Activated naive CD4-positive, alpha-beta T cell treated with anti-CD3 and anti-CD28 coated beads for 36 hours (primary cell): ENCODE measurements at regions of chr11 and their contacts with region 1.

Region 1: DNA sequence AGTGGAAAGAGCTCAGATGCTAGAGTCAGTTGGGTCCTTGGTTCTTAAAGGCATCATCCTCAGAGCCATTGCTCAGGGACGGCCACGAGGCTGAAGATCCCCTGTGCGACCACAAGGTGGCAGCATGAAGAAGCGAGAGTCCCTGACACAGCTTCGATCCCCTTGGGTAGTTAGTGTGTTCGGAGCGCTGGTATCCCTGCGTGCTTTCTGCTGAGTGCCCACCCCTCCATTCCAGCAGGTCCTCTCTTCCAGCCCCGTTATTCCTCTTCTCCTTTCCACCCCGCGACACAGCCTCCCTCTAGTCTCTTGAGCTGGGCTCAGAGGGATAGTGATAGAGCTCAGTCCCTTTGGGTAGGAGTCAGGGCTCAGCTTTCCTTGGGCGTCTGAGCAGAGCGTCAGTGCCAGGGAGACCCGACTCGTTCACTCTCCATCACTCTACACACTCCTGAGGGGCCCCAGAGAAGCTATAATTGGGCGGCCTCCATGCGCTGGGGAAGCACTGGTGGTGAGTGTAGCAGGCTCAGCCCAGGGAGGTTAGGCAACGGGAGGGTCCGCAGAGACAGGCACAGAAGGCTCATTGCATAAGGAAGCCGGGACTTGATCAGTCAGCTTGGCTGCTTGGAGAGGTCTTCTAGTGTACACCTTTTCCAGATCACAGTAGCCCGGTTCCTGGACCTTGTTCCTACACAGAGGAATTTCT is at the start of gene OR51D1:
- DNase-seq: peak; percentile 81
- H3K4me3 Mint-ChIP-seq: no peak within 1 kb of the TSS
- H3K27ac Mint-ChIP-seq: no peak within 1 kb of the TSS
- H3K4me1 Mint-ChIP-seq: no peaks in the 10 kb centered on the region
- H3K27me3 Mint-ChIP-seq: peaks cover 2% of the 10 kb centered on the region
- total RNA-seq, gene OR51D1: not detected

Region 2: DNA sequence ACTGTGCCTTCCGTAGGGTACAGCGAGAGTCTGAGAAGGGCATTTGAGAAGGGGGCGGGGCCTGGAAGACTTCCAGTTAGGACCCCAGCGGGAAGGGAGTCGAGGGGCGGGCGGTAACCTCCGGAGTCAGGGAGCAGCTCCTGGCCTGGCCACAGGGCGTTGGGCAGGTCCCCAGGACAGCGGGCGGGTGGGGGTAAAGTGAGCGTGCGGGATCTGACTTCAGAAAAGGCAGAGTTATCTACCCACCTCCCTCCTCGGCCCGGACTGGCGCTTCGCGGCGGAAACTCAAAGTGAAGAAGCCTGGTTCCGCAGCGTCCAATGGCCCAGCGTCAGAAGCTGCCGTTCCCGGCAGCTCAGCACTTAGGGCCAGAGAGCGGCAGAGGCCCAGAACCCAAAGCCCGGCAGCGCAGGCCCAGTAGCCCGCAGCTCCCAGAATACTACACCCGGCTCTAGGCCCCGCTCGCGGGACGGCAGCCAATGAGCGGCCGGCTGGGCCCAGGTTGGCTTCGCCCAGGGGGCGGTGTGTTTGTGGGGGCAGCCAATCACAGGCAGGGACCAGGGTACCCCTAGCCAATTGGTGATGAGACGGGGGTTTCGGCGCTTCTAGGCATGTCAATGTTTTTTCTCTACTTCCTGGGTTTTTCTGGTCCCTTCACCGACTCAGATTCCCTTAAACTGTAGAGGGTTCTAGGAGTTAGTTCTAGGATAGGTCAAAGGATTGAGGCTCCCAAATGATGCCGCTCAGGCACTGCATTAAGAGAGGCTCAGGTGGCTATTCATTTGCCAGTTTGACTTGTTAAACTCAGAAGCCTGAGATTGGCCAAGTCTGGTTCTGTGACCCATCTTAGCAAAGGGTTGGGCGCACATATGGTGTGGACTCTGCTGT is 29.1 kb before region 1 on chr11 and contains the start of gene TRIM68:
- CTCF ChIA-PET with region 1: interaction called, 10 read pairs
- intact Hi-C with region 1: no loop called
- DNase-seq: peak; percentile 97
- H3K4me3 Mint-ChIP-seq: peak within 1 kb of the TSS; percentile 94
- H3K27ac Mint-ChIP-seq: peak within 1 kb of the TSS; percentile 88
- H3K4me1 Mint-ChIP-seq: peaks cover 45% of the 10 kb centered on the region
- H3K27me3 Mint-ChIP-seq: no peaks in the 10 kb centered on the region
- total RNA-seq, gene TRIM68: 11.3 to 15.4 TPM

Region 3: DNA sequence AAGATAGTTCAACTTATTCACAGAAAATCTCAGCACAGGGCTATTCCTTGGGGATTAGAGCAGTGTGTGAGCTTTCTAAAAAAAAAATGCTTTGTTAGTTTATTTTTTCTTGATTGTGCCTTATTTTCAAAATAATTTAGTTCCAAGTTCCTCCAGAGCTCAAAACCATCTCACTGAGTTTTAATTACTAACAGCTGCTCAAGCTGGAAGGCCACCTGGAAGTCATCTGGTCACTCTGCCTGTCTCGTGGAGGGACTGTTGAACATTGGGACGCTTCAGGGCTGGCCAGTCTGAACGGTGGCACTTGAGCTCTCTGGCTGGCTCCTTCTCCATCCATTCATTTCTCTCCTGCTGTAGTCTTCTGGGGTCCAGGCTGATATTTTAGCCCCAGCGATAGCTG is 10.7 kb after region 1 on chr11:
- CTCF ChIA-PET with region 1: interaction called, 10 read pairs
- intact Hi-C with region 1: no loop called
- DNase-seq: no peak
- H3K4me3 Mint-ChIP-seq: no peak overlapping the region
- H3K27ac Mint-ChIP-seq: no peak overlapping the region
- H3K4me1 Mint-ChIP-seq: no peaks in the 10 kb centered on the region
- H3K27me3 Mint-ChIP-seq: peaks cover 5% of the 10 kb centered on the region

Region 4: DNA sequence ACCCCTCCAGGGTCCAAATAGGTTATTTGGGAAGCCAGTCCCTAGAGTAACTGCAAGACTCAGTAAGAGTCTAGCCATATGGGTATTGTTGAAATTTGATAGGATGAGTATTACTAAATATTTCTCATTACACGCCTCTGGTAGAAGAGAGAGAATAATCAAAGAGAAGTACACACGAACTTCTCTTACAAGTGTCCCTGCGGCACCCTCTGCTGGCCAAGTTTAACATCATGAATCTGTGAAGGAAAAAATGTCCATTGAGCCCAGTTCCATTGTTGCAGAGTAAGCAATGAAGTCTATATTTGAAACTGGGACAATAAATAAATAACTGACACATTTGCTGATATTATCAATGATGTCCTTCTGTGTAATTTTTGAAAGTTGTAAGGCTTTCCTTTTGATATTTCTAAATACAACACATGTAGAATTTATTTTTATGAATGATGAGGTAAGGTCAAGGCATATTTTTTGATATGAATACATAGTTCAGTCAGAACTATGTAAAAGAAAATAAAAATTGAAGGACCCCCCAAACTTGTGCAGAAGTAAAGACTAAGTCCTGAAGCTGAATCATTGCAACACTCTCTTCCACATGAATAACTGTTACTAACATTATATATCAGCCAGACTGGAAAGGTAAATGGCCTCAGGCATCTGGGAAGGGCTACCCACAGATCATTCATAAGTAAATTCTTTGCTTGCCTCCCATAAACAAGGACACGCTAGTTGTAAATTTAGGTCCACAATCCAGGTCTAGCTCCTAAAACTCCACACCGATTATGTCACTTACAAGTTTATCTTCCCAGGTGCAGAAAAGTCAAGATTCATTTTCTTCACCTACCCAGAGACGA is 367.5 kb after region 1 on chr11:
- CTCF ChIA-PET with region 1: interaction called, 5 read pairs
- intact Hi-C with region 1: loop called (anchors 1 kb)
- DNase-seq: peak; percentile 62
- H3K4me3 Mint-ChIP-seq: no peak overlapping the region
- H3K27ac Mint-ChIP-seq: no peak overlapping the region
- H3K4me1 Mint-ChIP-seq: no peaks in the 10 kb centered on the region
- H3K27me3 Mint-ChIP-seq: peaks cover 13% of the 10 kb centered on the region

Region 5: DNA sequence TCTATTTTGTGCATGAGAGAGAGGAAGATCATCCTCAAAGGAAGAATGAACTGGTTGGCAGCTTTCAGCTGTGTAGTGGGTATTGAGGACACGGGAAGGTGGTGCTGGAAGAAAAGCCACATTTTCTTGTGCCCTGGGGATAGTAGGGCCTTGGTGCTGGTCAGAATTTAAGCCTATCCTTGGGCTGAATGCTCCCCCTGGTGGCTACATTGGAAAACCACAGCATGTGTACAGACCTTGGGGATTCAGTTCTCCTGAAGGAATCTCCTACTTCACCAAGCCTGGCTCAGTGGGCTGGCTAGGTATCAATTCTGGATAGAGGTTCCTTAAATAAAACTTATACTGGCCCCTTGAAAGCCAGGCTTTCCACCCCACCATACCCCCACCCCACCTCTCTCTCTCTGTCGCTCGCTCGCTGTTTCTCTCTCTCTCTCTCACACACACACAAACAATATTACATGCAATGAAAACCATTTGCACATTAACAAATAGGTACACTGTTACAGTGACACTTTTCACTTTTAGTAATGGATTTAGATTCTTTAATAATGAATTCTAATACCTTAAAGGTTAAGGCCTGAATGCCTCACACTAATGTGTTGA is 743.7 kb after region 1 on chr11:
- CTCF ChIA-PET with region 1: no interaction called
- intact Hi-C with region 1: loop called (anchors 2 kb)
- DNase-seq: peak; percentile 52
- H3K4me3 Mint-ChIP-seq: no peak overlapping the region
- H3K27ac Mint-ChIP-seq: no peak overlapping the region
- H3K4me1 Mint-ChIP-seq: no peaks in the 10 kb centered on the region
- H3K27me3 Mint-ChIP-seq: no peaks in the 10 kb centered on the region

Region 6: DNA sequence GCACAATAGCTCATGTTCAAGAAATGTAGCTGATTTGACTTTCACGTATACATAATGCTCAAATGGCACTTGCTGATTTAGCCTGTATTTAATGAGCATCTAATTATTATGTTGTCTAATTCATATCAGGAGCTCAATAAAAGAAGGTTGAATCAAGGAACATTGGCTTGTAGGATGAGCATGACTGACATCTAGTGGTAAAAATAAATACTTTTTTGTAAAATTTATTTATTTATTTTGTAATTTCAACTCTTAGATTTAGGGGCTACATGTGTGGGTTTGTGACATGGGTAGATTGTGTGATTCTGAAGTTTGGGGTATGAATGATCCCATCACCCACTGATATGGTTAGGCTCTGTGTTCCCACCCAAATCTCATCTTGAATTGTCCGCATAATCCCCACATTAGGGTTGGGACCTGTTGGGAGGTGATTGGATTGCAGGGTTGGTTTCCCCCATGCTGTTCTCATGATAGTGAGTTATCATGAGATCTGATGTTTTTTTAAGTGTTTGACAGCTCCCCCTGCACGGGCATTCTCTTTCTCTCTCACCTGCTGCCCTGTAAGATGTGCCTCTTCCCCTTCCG is 1254.2 kb after region 1 on chr11:
- CTCF ChIA-PET with region 1: no interaction called
- intact Hi-C with region 1: loop called (anchors 2 kb)
- DNase-seq: no peak
- H3K4me3 Mint-ChIP-seq: no peak overlapping the region
- H3K27ac Mint-ChIP-seq: no peak overlapping the region
- H3K4me1 Mint-ChIP-seq: no peaks in the 10 kb centered on the region
- H3K27me3 Mint-ChIP-seq: peaks cover 4% of the 10 kb centered on the region